K562 (cell line): ENCODE measurements at regions of chrX and their contacts with region 1.

Region 1: DNA sequence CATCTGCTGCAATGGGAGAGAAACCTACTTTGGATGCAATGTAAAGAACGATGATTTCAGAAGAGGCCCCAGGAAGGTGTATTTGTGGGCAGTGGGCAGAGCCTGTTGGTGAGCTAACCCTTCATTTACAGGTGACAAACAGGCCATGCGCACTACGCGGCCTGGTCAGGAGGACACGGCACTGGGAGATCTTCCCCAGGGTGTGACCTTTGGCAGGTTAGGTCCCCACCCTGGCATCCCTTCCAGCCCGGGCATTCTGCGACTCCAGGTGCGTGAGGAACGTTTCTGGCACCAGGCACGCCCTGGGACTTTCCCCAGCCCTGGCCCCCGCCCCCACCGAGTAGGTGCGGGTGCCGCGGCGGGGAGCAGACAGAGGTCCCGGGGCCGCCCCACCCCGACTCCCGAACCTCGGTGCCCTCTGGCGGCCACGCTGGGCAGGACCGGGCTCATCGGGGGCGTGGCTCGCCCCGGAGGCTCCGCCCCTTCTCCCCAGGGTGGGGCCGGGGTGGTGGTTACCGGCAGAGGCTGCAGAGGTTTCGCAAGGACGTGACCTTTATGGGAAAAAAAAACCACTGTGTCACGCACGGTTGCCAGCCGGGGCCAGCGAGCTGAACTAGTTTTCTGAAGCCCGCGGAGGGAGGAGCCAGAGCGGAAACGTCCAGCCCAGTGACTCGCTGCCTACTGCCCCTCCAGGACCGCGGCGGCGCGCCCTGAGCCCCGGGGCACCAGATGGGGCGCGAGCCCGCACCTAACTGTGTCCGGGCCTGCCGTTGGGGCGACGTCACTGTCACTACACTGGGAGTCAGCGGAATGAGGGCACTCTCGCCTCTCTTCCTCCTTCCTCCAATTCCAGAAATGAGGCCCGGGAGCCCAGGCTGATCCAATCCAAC is 5.0 kb upstream of the NYX start:
- DNase-seq: peak; percentile 88 to 97 (median 95)
- ATAC-seq: peak; percentile 98
- H3K4me3 ChIP-seq: peak overlapping the region; percentile 36
- H3K27ac ChIP-seq: peak overlapping the region; percentile 73
- H3K4me1 ChIP-seq: peaks cover 10 to 11% of the 10 kb centered on the region in 2 experiments; a peak in 4 of 5 replicates
- H3K27me3 ChIP-seq: no peaks in the 10 kb centered on the region
- CTCF ChIP-seq: peak; percentile 69 to 78 (median 71)
- EP300 ChIP-seq: peak; percentile 51
- POLR2A ChIP-seq: peak; percentile 56; the same call in 1 of the 2 replicates
- RAD21 ChIP-seq: peak; percentile 72 to 77

Region 2: GRCh38 chrX:41198406-41198805 is 243.8 kb before region 1 on chrX:
- CTCF ChIA-PET with region 1: no interaction called
- POLR2A ChIA-PET with region 1: no interaction called
- in situ Hi-C with region 1: no loop called
- intact Hi-C with region 1: no loop called
- DNase-seq: no peak
- ATAC-seq: no peak
- H3K4me3 ChIP-seq: no peak overlapping the region
- H3K27ac ChIP-seq: no peak overlapping the region
- H3K4me1 ChIP-seq: no peaks in the 10 kb centered on the region; a peak in 1 of 5 replicates
- H3K27me3 ChIP-seq: no peaks in the 10 kb centered on the region
- CTCF ChIP-seq: no peak
- EP300 ChIP-seq: no peak
- POLR2A ChIP-seq: no peak
- RAD21 ChIP-seq: no peak

Region 3: DNA sequence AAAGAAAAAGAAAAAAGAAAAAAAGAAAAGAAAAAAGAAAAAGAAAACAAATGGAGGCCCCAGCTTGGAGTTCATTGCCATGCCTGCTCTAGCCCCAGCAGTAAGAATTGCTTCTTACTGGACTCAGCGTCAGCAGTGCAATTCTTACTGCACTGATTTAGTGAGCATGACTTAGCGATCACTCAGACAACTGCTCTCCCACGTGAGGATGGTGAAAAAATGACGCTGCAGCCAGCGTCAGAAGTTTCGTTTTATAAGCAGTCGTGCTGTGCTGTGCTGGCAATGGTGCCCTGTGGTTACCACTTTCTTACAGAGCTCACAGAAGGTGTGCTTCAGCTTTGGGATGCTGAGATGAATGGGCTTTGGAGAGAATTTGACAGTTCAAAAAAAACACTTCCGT is 176.6 kb before region 1 on chrX:
- CTCF ChIA-PET with region 1: no interaction called
- POLR2A ChIA-PET with region 1: no interaction called
- in situ Hi-C with region 1: loop called (anchors 10 kb)
- intact Hi-C with region 1: no loop called
- DNase-seq: peak in 1 of 4 experiments; percentile 18
- ATAC-seq: peak; percentile 64
- H3K4me3 ChIP-seq: no peak overlapping the region
- H3K27ac ChIP-seq: no peak overlapping the region
- H3K4me1 ChIP-seq: no peaks in the 10 kb centered on the region; a peak in 1 of 5 replicates
- H3K27me3 ChIP-seq: no peaks in the 10 kb centered on the region
- CTCF ChIP-seq: no peak
- EP300 ChIP-seq: no peak
- POLR2A ChIP-seq: no peak
- RAD21 ChIP-seq: no peak